Natural killer cell (primary cell): ENCODE measurements at regions of chr6 and their contacts with region 1.

Region 1: DNA sequence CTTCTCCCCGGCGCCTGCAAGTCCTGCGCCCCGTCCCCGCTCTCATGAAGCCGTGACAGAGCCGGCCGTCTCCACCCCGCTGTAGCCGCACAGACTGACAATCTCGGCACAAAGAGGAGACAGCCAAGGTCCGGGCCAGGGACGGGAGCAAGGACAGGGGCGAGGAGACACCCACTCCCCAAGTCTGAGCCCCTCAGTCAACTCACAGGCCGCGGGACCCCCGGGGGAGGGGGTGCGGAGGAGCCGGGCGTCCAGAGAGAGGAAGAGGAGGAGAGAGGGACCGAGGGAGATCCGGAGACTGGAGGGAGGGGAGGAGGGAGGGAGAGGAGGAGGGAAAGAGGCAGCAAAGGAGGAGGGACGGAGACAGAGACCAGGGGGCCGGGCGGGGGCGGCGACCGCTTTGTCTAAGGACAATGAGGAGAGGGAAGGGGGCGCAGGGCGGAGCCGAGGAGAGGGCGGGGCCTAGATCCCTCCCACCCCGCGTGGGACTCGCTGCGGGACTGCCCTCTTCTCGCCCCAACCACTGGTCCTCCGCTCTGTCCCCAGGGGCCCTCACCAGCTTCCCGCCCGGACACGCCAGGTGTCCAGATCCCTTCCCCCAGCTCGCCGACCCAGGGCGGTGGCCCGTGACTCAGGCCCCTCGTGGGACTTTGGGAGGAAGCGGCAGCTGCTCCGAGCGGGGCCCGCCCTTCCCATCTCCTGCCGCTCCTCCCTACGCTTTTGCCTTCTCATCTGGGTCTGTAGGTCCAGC is 638 bp upstream of the PPP1R18 start:
- DNase-seq: peak; percentile 64 to 78
- ATAC-seq: peak; percentile 25 to 45 (median 30)
- H3K4me3 ChIP-seq: peak overlapping the region; percentile 96
- H3K4me3 Mint-ChIP-seq: peak overlapping the region; percentile 96
- H3K27ac ChIP-seq: peak overlapping the region; percentile 96
- H3K27ac Mint-ChIP-seq: peak overlapping the region; percentile 91 to 98
- H3K4me1 ChIP-seq: peaks cover 68% of the 10 kb centered on the region
- H3K4me1 Mint-ChIP-seq: peaks cover 63 to 80% of the 10 kb centered on the region in 2 donors
- H3K27me3 ChIP-seq: no peaks in the 10 kb centered on the region
- H3K27me3 Mint-ChIP-seq: no peaks in the 10 kb centered on the region
- CTCF ChIP-seq: no peak

Region 2: DNA sequence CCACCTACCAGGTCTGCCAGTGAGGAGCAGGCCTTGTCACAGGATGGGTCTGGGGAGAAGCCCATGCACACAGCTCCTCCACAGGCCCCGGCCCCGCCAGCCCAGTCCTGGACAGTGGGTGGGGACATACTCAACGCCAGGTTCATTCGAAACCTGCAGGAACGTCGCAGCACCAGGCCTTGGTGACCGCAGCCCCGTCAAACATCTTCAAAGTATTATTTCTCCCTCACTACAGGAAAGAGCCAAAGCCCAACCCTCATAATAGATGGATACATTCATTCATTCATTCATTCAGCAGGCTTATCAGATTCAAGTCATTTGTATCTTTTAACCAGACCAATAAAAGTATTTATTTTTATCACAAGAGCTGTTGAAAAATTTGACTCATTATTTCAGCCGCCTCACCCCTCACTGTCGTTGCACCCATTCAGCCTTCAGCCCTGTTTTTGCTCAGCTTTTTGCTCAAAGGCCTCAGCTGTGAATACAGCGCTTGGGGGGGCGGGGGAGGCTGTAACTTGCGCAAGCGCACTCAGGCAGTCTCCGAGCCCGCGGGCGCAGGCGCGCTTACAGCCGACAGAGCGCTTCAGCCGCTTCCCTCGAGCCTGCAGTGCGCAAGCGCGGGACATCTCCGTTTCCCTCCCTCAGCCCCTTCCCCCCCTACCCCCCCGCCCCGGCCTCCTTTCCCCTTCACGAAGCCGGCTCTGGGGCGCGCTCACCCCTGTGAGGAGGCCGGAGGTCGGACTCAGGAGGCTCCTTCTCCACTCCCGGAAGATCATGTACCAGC is 40.4 kb before region 1 on chr6 and contains the start of gene C6orf136:
- intact Hi-C with region 1: loop called (anchors 2 kb)
- DNase-seq: peak; percentile 85 to 99
- ATAC-seq: peak; percentile 77 to 87 (median 80)
- H3K4me3 ChIP-seq: peak within 1 kb of the TSS; percentile 96
- H3K4me3 Mint-ChIP-seq: peak within 1 kb of the TSS; percentile 86
- H3K27ac ChIP-seq: peak within 1 kb of the TSS; percentile 98
- H3K27ac Mint-ChIP-seq: peak within 1 kb of the TSS; percentile 82 to 83
- H3K4me1 ChIP-seq: peaks cover 16% of the 10 kb centered on the region
- H3K4me1 Mint-ChIP-seq: peaks cover 15 to 24% of the 10 kb centered on the region in 2 donors
- H3K27me3 ChIP-seq: no peaks in the 10 kb centered on the region
- H3K27me3 Mint-ChIP-seq: no peaks in the 10 kb centered on the region
- CTCF ChIP-seq: no peak
- total RNA-seq, gene C6orf136: 39.4 to 51.4 (median 50.9) TPM